ENCODE measurements at regions of chr11 and their contacts with region 1.

Region 1: GRCh38 chr11:73982969-73983740 is 512 bp upstream of the UCP2 start:
- H3K4me3 Mint-ChIP-seq: peak overlapping the region; percentile 96
- H3K27ac Mint-ChIP-seq: peak overlapping the region; percentile 97
- H3K4me1 Mint-ChIP-seq: peaks cover 48% of the 10 kb centered on the region
- H3K27me3 Mint-ChIP-seq: no peaks in the 10 kb centered on the region

Region 2: GRCh38 chr11:73995247-73995646 is 12.1 kb after region 1 on chr11:
- intact Hi-C with region 1: loop called (anchors 1 kb)
- H3K4me3 Mint-ChIP-seq: no peak overlapping the region
- H3K27ac Mint-ChIP-seq: peak overlapping the region; percentile 75
- H3K4me1 Mint-ChIP-seq: peaks cover 5% of the 10 kb centered on the region
- H3K27me3 Mint-ChIP-seq: no peaks in the 10 kb centered on the region

Region 3: DNA sequence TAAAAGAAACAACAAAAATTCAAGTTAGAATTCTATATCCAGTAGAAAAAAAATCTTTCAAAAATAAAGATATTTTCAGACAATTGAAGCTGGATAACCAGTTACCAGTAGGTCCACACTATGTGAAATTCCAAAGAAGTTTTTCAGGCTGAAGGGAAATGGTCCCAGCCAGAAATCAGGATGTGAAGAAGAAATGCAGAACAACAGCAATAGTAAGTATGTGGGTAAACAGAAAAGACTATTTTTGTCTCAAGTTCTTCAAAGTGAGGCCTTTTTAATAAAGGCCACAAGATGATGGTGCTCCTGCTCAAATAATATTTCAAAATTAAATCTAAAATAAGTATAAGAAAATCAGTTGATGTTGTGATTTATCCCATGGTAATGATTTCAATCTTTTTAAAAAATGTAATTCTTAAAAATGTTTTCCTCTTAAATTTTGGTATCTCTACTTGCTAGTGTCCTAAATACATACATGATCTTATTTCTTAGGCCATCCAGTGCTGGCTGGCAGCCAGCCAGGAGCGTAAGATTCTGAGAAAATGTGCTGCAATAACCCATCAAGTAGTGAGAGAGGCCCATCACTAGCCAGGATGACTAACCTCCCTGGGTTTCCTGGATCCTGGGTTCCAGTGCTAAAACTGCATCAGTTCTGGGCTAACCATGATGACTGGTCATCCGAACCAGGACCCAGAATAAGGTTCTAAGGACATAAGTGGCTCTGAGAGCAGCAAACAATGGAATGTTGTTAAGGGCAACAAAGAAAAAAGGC is 41.3 kb after region 1 on chr11:
- intact Hi-C with region 1: loop called (anchors 2 kb)
- H3K4me3 Mint-ChIP-seq: no peak overlapping the region
- H3K27ac Mint-ChIP-seq: peak overlapping the region; percentile 74
- H3K4me1 Mint-ChIP-seq: peaks cover 32% of the 10 kb centered on the region
- H3K27me3 Mint-ChIP-seq: no peaks in the 10 kb centered on the region

Region 4: DNA sequence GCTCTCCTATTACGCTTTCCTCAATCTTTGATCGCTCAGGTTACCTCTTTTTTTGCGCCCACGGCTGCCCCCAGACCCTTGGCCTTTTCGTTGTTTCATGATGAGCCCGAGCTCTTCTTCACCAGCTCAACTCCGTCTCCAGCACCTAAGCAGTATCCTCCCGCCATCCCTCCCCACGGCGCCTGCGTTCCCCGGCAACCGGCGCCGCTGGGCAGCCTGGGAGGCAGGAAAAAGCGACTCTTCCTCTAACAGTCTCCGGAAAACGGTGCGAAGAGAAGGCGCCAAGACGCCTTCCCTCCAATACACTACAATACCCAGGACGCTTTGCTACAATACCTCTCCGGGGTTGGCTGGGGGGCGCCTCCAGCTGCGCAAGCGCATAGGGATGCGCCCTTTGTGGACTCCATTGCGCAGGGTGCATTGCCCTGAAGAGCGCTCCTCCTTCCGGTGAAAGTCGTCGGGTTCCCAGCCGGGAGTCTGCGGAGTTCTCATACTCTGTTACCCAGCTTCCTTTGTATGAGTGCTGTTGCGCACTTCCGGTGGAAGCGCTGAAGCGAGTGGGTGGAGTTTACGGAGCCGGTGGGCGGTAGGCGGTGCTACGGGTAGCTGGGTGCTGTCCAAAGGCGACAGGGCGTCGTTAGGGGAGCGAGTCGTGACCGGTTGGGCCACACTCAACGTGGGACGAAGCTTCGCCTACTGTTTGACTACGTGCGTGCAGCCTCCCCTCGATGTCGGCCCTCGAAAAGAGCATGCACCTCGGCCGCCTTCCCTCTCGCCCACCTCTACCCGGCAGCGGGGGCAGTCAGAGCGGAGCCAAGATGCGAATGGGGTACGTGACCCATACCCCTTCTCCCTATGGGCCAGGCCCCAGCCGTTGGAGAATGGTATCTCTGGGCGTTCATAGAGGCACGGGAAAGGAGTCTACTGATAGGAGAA is 187.8 kb after region 1 on chr11 and contains the starts of genes C2CD3 and PPME1:
- intact Hi-C with region 1: loop called (anchors 5 kb)
- H3K4me3 Mint-ChIP-seq: no peak within 1 kb of the TSS
- H3K27ac Mint-ChIP-seq: no peak within 1 kb of the TSS
- H3K4me1 Mint-ChIP-seq: peaks cover 6% of the 10 kb centered on the region
- H3K27me3 Mint-ChIP-seq: no peaks in the 10 kb centered on the region

Measured in dendritic cell treated with granulocyte-macrophage colony-stimulating factor and Interleukin-4, amounts not matched to agents 40 ng/mL and 50 ng/mL, for 4 days (primary cell).